ENCODE measurements at regions of chr2 and their contacts with region 1.

Region 1: GRCh38 chr2:224284134-224284946 is 117.6 kb downstream of the FAM124B start:
- DNase-seq: peak in 1 of 2 donors; percentile 60
- ATAC-seq: peak in 1 of 3 donors; percentile 29
- H3K4me3 ChIP-seq: no peak overlapping the region
- H3K4me3 Mint-ChIP-seq: no peak overlapping the region
- H3K27ac ChIP-seq: no peak overlapping the region
- H3K27ac Mint-ChIP-seq: no peak overlapping the region
- H3K4me1 ChIP-seq: no peaks in the 10 kb centered on the region
- H3K4me1 Mint-ChIP-seq: no peaks in the 10 kb centered on the region
- H3K27me3 ChIP-seq: no peaks in the 10 kb centered on the region
- H3K27me3 Mint-ChIP-seq: peaks cover 19 to 44% of the 10 kb centered on the region in 2 donors
- CTCF ChIP-seq: peak; percentile 78

Region 2: DNA sequence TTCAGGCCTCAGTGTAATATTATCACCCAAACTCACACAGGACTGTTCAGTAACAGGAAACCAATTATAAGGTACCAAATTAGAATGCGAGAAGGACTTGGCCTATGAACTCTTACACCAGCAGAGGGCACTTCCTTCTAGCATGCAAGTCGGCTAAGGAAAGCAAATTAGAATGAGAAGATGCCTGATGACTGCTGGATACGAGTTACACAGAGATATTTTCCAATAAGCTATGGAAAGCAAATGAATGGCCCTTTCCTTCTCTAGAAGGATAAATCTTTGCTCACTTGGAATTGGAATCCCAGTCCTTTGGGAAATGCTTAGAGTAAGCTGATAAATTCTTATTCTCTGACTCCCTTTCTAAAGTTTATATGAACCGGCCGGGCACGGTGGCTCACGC is 556.8 kb before region 1 on chr2:
- intact Hi-C with region 1: loop called (anchors 5 kb)
- DNase-seq: peak; percentile 22 to 67
- ATAC-seq: peak; percentile 85 to 97 (median 93)
- H3K4me3 ChIP-seq: no peak overlapping the region
- H3K4me3 Mint-ChIP-seq: no peak overlapping the region
- H3K27ac ChIP-seq: no peak overlapping the region
- H3K27ac Mint-ChIP-seq: peak overlapping the region in 1 of 2 donors; percentile 42
- H3K4me1 ChIP-seq: peaks cover 3% of the 10 kb centered on the region
- H3K4me1 Mint-ChIP-seq: peaks cover 5 to 7% of the 10 kb centered on the region in 2 donors
- H3K27me3 ChIP-seq: no peaks in the 10 kb centered on the region
- H3K27me3 Mint-ChIP-seq: peaks cover 5 to 6% of the 10 kb centered on the region in 2 donors
- CTCF ChIP-seq: peak; percentile 65

Region 3: DNA sequence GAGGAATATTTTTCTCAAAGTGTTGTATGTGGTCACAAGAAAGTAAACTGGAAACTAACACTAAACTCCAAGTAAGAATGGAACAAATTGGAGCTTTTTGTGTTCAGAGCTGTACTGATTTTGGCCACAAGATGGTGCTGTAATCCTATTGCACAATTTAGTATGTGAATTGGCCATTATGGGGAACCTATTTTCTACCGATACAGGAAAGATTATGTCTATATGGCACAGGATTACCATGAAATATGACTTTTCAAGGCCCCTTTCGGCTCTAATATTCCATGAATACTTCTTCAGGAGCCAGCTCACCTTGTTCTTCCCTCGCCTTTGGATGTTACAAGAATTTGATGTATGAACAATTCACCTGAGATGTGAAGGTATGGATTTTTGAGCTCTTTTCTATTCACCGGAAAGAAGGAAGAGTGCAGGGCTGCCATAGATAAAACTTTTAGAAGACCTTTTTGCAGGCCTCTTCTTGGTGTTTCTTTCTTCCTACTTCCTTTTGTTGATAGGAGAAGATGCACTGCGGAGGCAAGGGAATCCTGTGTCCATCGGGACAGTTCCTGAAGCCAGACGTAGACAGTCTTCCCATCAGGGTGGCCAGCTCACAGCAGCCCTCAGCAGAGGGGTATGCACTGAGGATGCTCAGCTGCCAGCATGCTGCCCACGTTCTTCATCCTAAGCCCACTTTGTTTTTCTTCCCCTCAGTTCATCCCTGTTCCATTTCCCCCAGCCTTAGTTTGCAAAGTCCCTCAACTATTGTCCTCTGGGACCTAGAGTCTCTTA is 313.8 kb before region 1 on chr2:
- intact Hi-C with region 1: loop called (anchors 1 kb)
- DNase-seq: peak in 1 of 2 donors; percentile 82
- ATAC-seq: peak; percentile 73 to 79 (median 78)
- H3K4me3 ChIP-seq: no peak overlapping the region
- H3K4me3 Mint-ChIP-seq: no peak overlapping the region
- H3K27ac ChIP-seq: no peak overlapping the region
- H3K27ac Mint-ChIP-seq: peak overlapping the region in 1 of 2 donors; percentile 22
- H3K4me1 ChIP-seq: no peaks in the 10 kb centered on the region
- H3K4me1 Mint-ChIP-seq: peaks cover 9 to 11% of the 10 kb centered on the region in 2 donors
- H3K27me3 ChIP-seq: no peaks in the 10 kb centered on the region
- H3K27me3 Mint-ChIP-seq: no peaks in the 10 kb centered on the region
- CTCF ChIP-seq: peak; percentile 97

Measured in natural killer cell (primary cell).